CD8-positive, alpha-beta T cell (primary cell): ENCODE measurements at regions of chr11 and their contacts with region 1.

Region 1: DNA sequence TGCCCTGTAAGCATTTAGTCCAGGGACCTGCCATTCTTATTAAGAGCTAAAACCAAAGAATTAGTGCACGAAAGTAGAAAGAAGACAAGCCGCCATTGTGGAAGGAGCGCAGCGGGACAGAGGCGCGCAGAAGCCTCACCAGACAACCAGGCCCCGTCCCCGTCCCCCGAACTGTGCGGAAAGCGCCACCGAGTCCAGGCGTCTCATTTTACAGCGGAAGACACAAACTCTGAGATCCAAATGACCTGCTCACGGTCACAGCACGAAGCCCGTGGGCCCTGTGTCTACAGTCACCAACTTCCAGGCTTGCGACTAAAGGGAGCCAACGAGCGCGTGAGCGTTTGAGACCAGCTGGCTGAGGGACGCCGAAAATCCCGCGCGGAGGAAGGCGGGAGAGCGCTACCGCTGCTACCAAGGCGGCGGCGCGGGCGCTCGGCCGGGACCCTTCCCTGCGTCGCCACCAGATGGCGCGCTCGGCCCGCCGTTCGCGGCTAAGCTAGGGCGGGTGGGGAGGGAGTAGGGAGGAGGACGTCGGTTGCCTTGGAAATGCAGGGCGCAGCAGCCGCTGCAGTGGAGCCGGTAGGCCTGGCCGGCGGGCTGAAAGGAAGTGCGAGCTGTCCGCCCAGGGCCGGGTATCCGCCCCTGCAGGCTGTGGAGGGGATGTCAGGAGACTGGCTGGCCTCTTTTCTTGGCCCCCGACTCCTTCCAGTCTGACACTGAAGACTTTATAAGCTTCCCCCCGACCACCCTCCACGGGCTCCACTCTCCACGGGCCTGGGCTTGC is 434 bp upstream of the CCDC83 start:
- DNase-seq: peak; percentile 86 to 96 (median 89)
- ATAC-seq: peak; percentile 97
- H3K4me3 ChIP-seq: peak overlapping the region; percentile 64 to 72
- H3K4me3 Mint-ChIP-seq: peak overlapping the region; percentile 88
- H3K27ac ChIP-seq: peak overlapping the region; percentile 75 to 77
- H3K27ac Mint-ChIP-seq: peak overlapping the region; percentile 91
- H3K4me1 ChIP-seq: peaks cover 6% of the 10 kb centered on the region
- H3K4me1 Mint-ChIP-seq: peaks cover 8% of the 10 kb centered on the region
- H3K27me3 ChIP-seq: no peaks in the 10 kb centered on the region
- H3K27me3 Mint-ChIP-seq: no peaks in the 10 kb centered on the region
- CTCF ChIP-seq: peak; percentile 84

Region 2: GRCh38 chr11:85694386-85694980 is 160.3 kb before region 1 on chr11:
- CTCF ChIA-PET with region 1: interaction called, 20 read pairs
- POLR2A ChIA-PET with region 1: interaction called, 6 read pairs
- intact Hi-C with region 1: loop called (anchors 1 kb)
- DNase-seq: peak in 3 of 9 experiments; percentile 15 to 71 (median 59)
- ATAC-seq: peak; percentile 55
- H3K4me3 ChIP-seq: no peak overlapping the region
- H3K4me3 Mint-ChIP-seq: no peak overlapping the region
- H3K27ac ChIP-seq: no peak overlapping the region
- H3K27ac Mint-ChIP-seq: no peak overlapping the region
- H3K4me1 ChIP-seq: peaks cover 2% of the 10 kb centered on the region
- H3K4me1 Mint-ChIP-seq: peaks cover 7% of the 10 kb centered on the region
- H3K27me3 ChIP-seq: no peaks in the 10 kb centered on the region
- H3K27me3 Mint-ChIP-seq: no peaks in the 10 kb centered on the region
- CTCF ChIP-seq: peak; percentile 88

Region 3: GRCh38 chr11:85826116-85826855 is 28.5 kb before region 1 on chr11:
- CTCF ChIA-PET with region 1: interaction called, 6 read pairs
- POLR2A ChIA-PET with region 1: interaction called, 7 read pairs
- intact Hi-C with region 1: loop called (anchors 1 to 2 kb)
- DNase-seq: peak in 4 of 9 experiments; percentile 17 to 46 (median 30)
- ATAC-seq: no peak
- H3K4me3 ChIP-seq: no peak overlapping the region
- H3K4me3 Mint-ChIP-seq: peak overlapping the region; percentile 12
- H3K27ac ChIP-seq: no peak overlapping the region
- H3K27ac Mint-ChIP-seq: peak overlapping the region; percentile 92
- H3K4me1 ChIP-seq: peaks cover 63% of the 10 kb centered on the region
- H3K4me1 Mint-ChIP-seq: peaks cover 66% of the 10 kb centered on the region
- H3K27me3 ChIP-seq: no peaks in the 10 kb centered on the region
- H3K27me3 Mint-ChIP-seq: no peaks in the 10 kb centered on the region
- CTCF ChIP-seq: peak; percentile 17

Region 4: GRCh38 chr11:85977751-85978160 is 123.0 kb after region 1 on chr11:
- CTCF ChIA-PET with region 1: no interaction called
- POLR2A ChIA-PET with region 1: no interaction called
- intact Hi-C with region 1: loop called (anchors 5 to 10 kb)
- DNase-seq: no peak
- ATAC-seq: no peak
- H3K4me3 ChIP-seq: no peak overlapping the region
- H3K4me3 Mint-ChIP-seq: no peak overlapping the region
- H3K27ac ChIP-seq: no peak overlapping the region
- H3K27ac Mint-ChIP-seq: no peak overlapping the region
- H3K4me1 ChIP-seq: no peaks in the 10 kb centered on the region
- H3K4me1 Mint-ChIP-seq: peaks cover 2% of the 10 kb centered on the region
- H3K27me3 ChIP-seq: no peaks in the 10 kb centered on the region
- H3K27me3 Mint-ChIP-seq: no peaks in the 10 kb centered on the region
- CTCF ChIP-seq: no peak

Region 5: GRCh38 chr11:86068951-86069407 is 214.2 kb after region 1 on chr11 and contains the start of gene PICALM:
- CTCF ChIA-PET with region 1: no interaction called
- POLR2A ChIA-PET with region 1: no interaction called
- intact Hi-C with region 1: loop called in 1 of 2 experiments (anchors 5 kb)
- DNase-seq: peak; percentile 91 to 99 (median 96)
- ATAC-seq: peak; percentile 91
- H3K4me3 ChIP-seq: peak within 1 kb of the TSS; percentile 94
- H3K4me3 Mint-ChIP-seq: peak within 1 kb of the TSS; percentile 100
- H3K27ac ChIP-seq: peak within 1 kb of the TSS; percentile 67 to 93
- H3K27ac Mint-ChIP-seq: peak within 1 kb of the TSS; percentile 97
- H3K4me1 ChIP-seq: peaks cover 24% of the 10 kb centered on the region
- H3K4me1 Mint-ChIP-seq: peaks cover 34% of the 10 kb centered on the region
- H3K27me3 ChIP-seq: no peaks in the 10 kb centered on the region
- H3K27me3 Mint-ChIP-seq: no peaks in the 10 kb centered on the region
- CTCF ChIP-seq: no peak
- total RNA-seq, gene PICALM: 79.8 to 80.0 TPM

Region 6: GRCh38 chr11:86291466-86292262 is 436.9 kb after region 1 on chr11:
- CTCF ChIA-PET with region 1: interaction called, 7 read pairs
- POLR2A ChIA-PET with region 1: no interaction called
- intact Hi-C with region 1: loop called (anchors 1 kb)
- DNase-seq: peak; percentile 21 to 74 (median 60)
- ATAC-seq: peak; percentile 67
- H3K4me3 ChIP-seq: no peak overlapping the region
- H3K4me3 Mint-ChIP-seq: no peak overlapping the region
- H3K27ac ChIP-seq: no peak overlapping the region
- H3K27ac Mint-ChIP-seq: no peak overlapping the region
- H3K4me1 ChIP-seq: no peaks in the 10 kb centered on the region
- H3K4me1 Mint-ChIP-seq: peaks cover 13% of the 10 kb centered on the region
- H3K27me3 ChIP-seq: no peaks in the 10 kb centered on the region
- H3K27me3 Mint-ChIP-seq: no peaks in the 10 kb centered on the region
- CTCF ChIP-seq: peak; percentile 73